Spleen (tissue), 13 donors: ENCODE measurements at regions of chr6 and their contacts with region 1.

Region 1: GRCh38 chr6:34196126-34196830 is 40.4 kb upstream of the HMGA1 start:
- DNase-seq: peak; percentile 99
- H3K4me3 ChIP-seq: peak overlapping the region; percentile 35 to 81 (median 58)
- H3K27ac ChIP-seq: peak overlapping the region in 3 of 8 donors; percentile 57 to 61 (median 58)
- H3K4me1 ChIP-seq: peaks cover 7 to 13% (median 11%) of the 10 kb centered on the region in 6 donors
- H3K27me3 ChIP-seq: peaks cover 0 to 6% (median 0%) of the 10 kb centered on the region in 7 donors
- CTCF ChIP-seq: peak; percentile 95 to 99 (median 98)
- POLR2A ChIP-seq: no peak

Region 2: DNA sequence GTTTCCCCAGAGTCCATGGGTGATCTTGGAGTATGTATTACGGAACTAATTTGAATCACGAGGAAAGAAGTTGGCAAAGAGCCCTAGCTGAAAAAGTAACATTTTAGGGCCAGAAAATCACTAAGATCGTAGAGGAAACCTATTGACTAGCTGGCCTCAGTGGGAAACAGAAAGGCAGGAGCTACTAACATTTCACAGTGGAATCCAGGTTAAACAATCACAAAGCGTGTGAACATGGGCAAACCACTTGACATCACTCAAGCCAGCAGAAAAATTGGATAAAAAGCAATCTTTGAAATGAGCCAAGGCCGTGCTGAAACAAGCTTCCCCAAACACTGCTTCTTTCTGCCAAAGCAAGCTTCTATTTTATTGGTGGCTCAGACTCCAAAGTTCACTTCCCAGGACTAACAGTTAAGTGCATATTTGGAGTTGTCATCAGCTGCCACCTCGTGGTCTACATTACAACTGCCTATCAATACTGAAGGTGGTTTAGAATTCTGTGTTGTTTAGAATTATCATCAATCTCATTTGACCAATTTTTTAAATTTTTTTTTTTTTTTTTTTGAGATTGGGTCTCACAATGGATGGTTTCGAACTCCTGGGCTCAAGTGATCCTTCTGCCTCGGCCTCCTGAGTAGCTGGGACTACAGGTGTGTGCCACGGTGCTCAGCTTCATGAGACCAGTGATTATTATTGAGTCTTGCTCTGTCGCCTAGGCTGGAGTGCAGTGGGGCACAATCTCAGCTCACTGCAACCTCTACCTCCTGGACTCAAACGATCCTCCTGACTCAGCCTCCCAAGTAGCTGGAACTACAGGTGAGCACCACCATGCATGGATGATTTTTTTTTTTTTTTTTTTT is 219.0 kb after region 1 on chr6:
- intact Hi-C with region 1: loop called (anchors 10 kb)
- DNase-seq: no peak
- H3K4me3 ChIP-seq: no peak overlapping the region
- H3K27ac ChIP-seq: peak overlapping the region in 7 of 8 donors; percentile 23 to 67 (median 52)
- H3K4me1 ChIP-seq: peaks cover 0 to 12% (median 5%) of the 10 kb centered on the region in 6 donors
- H3K27me3 ChIP-seq: no peaks in the 10 kb centered on the region
- CTCF ChIP-seq: peak; percentile 46 to 93 (median 77)
- POLR2A ChIP-seq: no peak

Region 3: DNA sequence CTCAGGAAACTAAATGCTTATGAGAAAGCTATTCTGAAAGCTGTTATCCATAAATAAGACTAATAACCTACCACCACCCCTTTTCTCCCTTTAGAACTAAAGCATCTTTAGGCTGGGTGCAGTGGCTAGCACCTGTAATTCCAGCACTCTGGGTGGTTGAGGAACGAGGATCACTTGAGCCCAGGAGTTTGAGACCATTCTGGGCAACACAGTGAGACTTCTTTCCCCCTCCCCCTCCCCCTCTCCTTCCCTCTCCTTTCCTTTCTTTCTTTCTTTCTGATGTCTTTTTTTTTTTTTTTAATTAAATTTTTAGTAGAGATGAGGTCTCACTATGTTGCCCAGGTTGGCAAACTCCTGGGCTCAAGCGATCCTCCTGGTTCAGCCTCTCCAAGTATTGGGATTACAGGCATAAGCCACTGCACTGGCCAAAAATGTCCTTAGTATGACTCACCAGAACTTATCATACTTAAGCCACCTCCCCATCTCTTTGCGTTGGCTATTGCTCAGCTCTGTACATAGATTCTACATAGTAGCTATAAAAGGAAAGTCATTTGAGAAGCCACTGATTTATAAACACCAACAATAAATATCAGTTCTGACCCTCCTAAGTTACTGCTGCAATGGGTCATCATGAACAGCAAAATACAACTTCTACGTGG is 414.7 kb after region 1 on chr6:
- intact Hi-C with region 1: loop called (anchors 10 kb)
- DNase-seq: no peak
- H3K4me3 ChIP-seq: no peak overlapping the region
- H3K27ac ChIP-seq: no peak overlapping the region
- H3K4me1 ChIP-seq: peaks cover 1 to 26% (median 10%) of the 10 kb centered on the region in 6 donors
- H3K27me3 ChIP-seq: no peaks in the 10 kb centered on the region
- CTCF ChIP-seq: no peak
- POLR2A ChIP-seq: no peak

Region 4: DNA sequence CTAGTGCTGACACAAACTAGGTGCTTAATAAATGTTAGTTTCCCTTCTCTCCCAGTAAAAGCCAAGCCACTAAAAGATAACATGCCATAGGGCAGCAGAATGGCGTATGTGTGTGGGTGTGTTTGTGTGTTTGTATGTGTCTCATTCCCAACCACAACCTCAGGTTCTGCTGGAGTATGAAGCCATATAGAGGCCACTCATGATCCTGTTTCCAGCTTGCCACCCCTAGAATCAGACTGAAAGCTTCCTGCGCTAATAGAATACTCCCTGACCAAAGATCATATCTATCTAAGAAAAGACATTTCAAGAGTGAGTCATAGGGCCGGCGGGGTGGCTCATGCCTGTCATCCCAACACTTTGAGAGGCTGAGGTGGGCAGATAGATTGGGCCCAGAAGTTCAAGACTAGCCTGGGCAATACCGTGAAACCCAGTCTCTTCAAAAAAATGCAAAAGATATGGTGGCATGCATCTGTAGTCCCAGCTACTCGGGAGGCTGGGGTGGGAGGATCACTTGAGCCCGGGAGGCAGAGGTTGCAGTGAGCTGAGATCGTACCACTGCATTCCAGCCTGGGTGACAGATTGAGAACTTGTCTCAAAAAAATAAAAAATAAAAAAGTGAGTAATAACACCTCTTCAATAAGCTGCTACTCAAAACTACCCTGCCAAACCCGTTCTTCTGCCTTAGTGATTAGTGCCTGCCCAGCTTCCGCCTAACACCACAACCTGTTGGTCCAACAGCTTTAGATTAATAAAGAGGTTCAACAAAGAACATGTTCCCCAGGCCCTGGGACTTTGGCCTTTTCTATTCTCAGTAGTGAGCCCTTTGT is 549.2 kb after region 1 on chr6:
- intact Hi-C with region 1: no loop called
- DNase-seq: no peak
- H3K4me3 ChIP-seq: no peak overlapping the region
- H3K27ac ChIP-seq: no peak overlapping the region
- H3K4me1 ChIP-seq: no peaks in the 10 kb centered on the region
- H3K27me3 ChIP-seq: no peaks in the 10 kb centered on the region
- CTCF ChIP-seq: no peak
- POLR2A ChIP-seq: no peak